Breast epithelium (tissue), 4 donors: ENCODE measurements at regions of chr21 and their contacts with region 1.

Region 1: GRCh38 chr21:25496825-25497482 is 110.3 kb downstream of the MRPL39 start:
- DNase-seq: no peak
- H3K4me3 ChIP-seq: no peak overlapping the region
- H3K27ac ChIP-seq: no peak overlapping the region
- H3K4me1 ChIP-seq: no peaks in the 10 kb centered on the region
- H3K27me3 ChIP-seq: no peaks in the 10 kb centered on the region
- CTCF ChIP-seq: no peak
- POLR2A ChIP-seq: no peak

Region 2: DNA sequence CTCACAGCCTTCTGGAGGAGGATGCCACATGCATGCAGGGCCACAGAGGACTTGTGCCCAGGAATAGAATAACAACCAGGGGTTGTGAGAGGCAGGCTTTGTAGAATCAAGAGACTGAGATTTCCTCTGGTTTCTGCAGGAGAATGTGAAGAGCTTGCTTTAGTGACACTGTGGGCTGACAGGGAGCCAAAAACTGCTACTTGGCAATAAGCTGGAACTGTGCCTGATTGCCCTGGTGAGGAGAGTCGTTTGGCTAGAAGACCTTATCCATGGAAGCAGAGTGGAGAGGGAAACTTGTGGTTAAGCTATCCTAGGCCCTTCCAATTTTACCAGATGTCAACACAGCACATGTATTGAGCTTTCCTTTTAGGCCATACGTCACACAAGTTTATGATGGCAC is 791.8 kb before region 1 on chr21:
- intact Hi-C with region 1: loop called (anchors 5 kb)
- DNase-seq: no peak
- H3K4me3 ChIP-seq: no peak overlapping the region
- H3K27ac ChIP-seq: no peak overlapping the region
- H3K4me1 ChIP-seq: no peaks in the 10 kb centered on the region
- H3K27me3 ChIP-seq: no peaks in the 10 kb centered on the region
- CTCF ChIP-seq: no peak
- POLR2A ChIP-seq: no peak

Region 3: DNA sequence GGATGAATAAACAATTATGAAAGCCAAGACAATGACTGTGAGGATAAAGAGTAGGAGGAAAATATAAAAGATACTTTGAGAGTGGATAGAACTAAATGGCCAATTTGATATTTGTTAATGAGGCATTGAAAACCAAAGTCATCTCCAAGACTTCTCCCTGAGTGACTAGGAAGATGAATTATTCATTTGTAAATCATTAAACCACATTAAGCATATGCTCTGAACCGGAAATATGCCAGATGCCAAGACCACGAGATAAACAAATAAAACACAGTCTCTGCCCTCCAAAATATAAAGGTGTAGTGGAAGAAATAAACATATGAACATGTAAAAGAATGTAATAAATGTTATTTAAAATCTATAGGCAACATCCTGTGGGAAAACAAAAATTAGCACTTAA is 31.6 kb after region 1 on chr21:
- intact Hi-C with region 1: no loop called
- DNase-seq: no peak
- H3K4me3 ChIP-seq: no peak overlapping the region
- H3K27ac ChIP-seq: no peak overlapping the region
- H3K4me1 ChIP-seq: no peaks in the 10 kb centered on the region
- H3K27me3 ChIP-seq: no peaks in the 10 kb centered on the region
- CTCF ChIP-seq: no peak
- POLR2A ChIP-seq: no peak